ENCODE measurements at regions of chr1 and their contacts with region 1.

Region 1: GRCh38 chr1:112674439-112674985 is at the start of gene MOV10:
- DNase-seq: peak; percentile 76
- H3K4me3 ChIP-seq: peak within 1 kb of the TSS; percentile 69 to 86 (median 72)
- H3K27ac ChIP-seq: peak within 1 kb of the TSS; percentile 78
- H3K4me1 ChIP-seq: peaks cover 22% of the 10 kb centered on the region
- H3K27me3 ChIP-seq: no peaks in the 10 kb centered on the region
- CTCF ChIP-seq: peak in 1 of 2 donors; percentile 13
- total RNA-seq, gene MOV10: 52.2 to 76.0 TPM

Region 2: GRCh38 chr1:112431038-112431437 is 243.5 kb before region 1 on chr1:
- CTCF ChIA-PET with region 1: interaction called, 26 read pairs
- dilution Hi-C with region 1: no loop called
- in situ Hi-C with region 1: no loop called
- intact Hi-C with region 1: no loop called
- DNase-seq: no peak
- H3K4me3 ChIP-seq: no peak overlapping the region
- H3K27ac ChIP-seq: no peak overlapping the region
- H3K4me1 ChIP-seq: no peaks in the 10 kb centered on the region
- H3K27me3 ChIP-seq: no peaks in the 10 kb centered on the region
- CTCF ChIP-seq: no peak

Region 3: DNA sequence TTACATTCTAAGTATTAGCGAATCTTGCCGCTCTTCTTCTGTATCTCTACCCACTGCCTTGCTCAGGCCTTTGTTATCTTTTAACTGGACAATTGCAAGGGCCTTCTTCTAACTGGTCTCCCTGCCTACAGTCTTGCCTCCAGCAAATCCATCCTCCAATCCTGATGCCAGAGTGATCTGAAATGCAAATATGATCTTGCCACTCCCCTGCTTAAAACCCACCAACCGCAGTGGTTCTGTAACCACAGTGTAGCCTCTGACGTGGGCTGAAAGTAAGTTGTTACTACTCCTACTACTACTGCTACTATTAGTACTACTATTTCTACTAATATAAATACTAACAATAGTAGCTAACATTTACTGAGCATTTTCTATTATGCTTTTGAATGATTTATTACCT is 12.3 kb after region 1 on chr1:
- CTCF ChIA-PET with region 1: interaction called, 4 read pairs
- dilution Hi-C with region 1: no loop called
- in situ Hi-C with region 1: no loop called
- intact Hi-C with region 1: loop called (anchors 1 kb)
- DNase-seq: peak; percentile 42
- H3K4me3 ChIP-seq: no peak overlapping the region
- H3K27ac ChIP-seq: peak overlapping the region; percentile 91
- H3K4me1 ChIP-seq: peaks cover 27% of the 10 kb centered on the region
- H3K27me3 ChIP-seq: no peaks in the 10 kb centered on the region
- CTCF ChIP-seq: no peak

Measured in mammary epithelial cell (primary cell).